Sigmoid colon (tissue), 7 donors: ENCODE measurements at regions of chr6 and their contacts with region 1.

Region 1: GRCh38 chr6:8131256-8131897 is 29.0 kb upstream of the EEF1E1 start:
- DNase-seq: no peak
- H3K4me3 ChIP-seq: no peak overlapping the region
- H3K27ac ChIP-seq: no peak overlapping the region
- H3K4me1 ChIP-seq: no peaks in the 10 kb centered on the region
- H3K27me3 ChIP-seq: peaks cover 0 to 16% (median 0%) of the 10 kb centered on the region in 3 donors
- CTCF ChIP-seq: peak in 3 of 4 experiments; percentile 20 to 32 (median 23)
- EP300 ChIP-seq: no peak
- POLR2A ChIP-seq: no peak

Region 2: GRCh38 chr6:8054276-8054675 is 77.1 kb before region 1 on chr6:
- intact Hi-C with region 1: no loop called
- DNase-seq: no peak
- H3K4me3 ChIP-seq: no peak overlapping the region
- H3K27ac ChIP-seq: no peak overlapping the region
- H3K4me1 ChIP-seq: no peaks in the 10 kb centered on the region
- H3K27me3 ChIP-seq: no peaks in the 10 kb centered on the region
- CTCF ChIP-seq: no peak
- EP300 ChIP-seq: no peak
- POLR2A ChIP-seq: no peak

Region 3: DNA sequence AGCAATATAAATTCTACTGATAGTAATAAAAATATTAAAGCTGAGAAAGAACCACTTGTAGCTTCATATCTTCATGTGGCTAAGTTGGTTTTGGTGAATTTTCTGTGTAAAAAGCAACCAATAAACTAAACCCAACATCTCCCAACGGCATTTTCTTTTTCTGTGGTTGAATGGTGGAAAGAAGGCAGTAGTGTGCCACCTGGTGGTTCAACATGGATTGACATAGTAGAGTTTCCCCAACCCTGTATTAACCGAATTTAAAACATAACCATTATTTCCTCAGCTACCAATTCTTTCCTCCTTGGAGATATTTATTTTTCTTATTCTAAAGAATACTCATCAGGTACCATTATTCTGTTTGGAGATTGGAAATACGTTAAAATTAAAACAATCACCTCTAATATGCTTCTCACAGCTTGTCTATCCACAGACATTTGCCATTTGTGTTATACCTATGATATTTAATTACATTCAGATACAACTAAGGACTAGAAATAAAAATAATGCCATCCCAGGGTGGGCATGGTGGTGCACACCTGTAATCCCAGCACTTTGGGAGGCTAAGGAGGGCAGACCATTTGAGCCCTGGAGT is 88.1 kb after region 1 on chr6:
- intact Hi-C with region 1: loop called (anchors 5 kb)
- DNase-seq: no peak
- H3K4me3 ChIP-seq: no peak overlapping the region
- H3K27ac ChIP-seq: no peak overlapping the region
- H3K4me1 ChIP-seq: peaks cover 0 to 3% (median 0%) of the 10 kb centered on the region in 4 donors
- H3K27me3 ChIP-seq: no peaks in the 10 kb centered on the region
- CTCF ChIP-seq: peak in 3 of 4 experiments; percentile 41 to 81 (median 66)
- EP300 ChIP-seq: no peak
- POLR2A ChIP-seq: no peak

Region 4: DNA sequence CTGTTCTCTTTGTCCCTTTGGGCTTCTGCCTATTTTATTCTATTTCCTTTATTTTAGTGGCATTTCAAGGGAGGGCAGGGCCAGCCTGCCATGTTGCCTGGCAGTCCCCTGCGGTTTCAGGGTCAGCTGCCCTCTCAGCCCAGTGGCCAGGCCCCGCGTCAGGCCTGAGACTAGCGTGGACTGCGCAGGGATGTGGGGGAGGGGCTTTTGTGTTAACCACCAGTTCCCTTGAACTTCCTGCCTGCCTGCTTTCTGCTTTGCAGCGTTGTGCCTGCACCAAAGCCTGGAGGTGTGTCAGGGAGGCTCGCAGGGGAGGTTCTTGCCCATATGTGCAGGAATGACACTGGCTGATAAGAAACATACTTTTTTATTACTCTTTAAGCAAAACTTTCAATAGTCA is 146.4 kb after region 1 on chr6:
- intact Hi-C with region 1: no loop called
- DNase-seq: no peak
- H3K4me3 ChIP-seq: no peak overlapping the region
- H3K27ac ChIP-seq: no peak overlapping the region
- H3K4me1 ChIP-seq: no peaks in the 10 kb centered on the region
- H3K27me3 ChIP-seq: no peaks in the 10 kb centered on the region
- CTCF ChIP-seq: no peak
- EP300 ChIP-seq: no peak
- POLR2A ChIP-seq: no peak